HEK293 (cell line): ENCODE measurements at regions of chr10 and their contacts with region 1.

Region 1: DNA sequence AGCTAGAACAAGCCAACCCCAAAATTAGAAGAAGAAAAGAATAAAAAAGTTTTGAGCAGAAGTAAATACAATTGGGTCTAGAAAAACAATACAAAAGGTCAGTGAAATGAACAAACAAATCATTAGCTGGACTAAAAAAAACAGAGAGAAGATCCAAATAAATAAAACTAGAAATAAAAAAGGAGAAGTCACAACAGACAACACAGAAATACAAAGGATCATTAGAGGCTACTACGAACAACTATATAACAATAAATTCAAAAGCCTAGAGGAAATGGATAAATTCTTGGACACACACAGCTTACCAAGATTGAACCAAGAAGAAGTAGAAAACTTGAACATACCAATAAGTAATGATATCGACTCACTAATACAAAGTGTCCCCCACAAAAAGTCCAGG is 13.4 kb upstream of the ADRA2A start:
- H3K4me3 ChIP-seq: no peak overlapping the region
- H3K27ac ChIP-seq: no peak overlapping the region
- H3K4me1 ChIP-seq: no peaks in the 10 kb centered on the region
- CTCF ChIP-seq: no peak

Region 2: GRCh38 chr10:111076191-111076681 is 12.8 kb after region 1 on chr10:
- CTCF ChIA-PET with region 1: interaction called, 15 read pairs
- POLR2A ChIA-PET with region 1: no interaction called
- H3K4me3 ChIP-seq: peak overlapping the region; percentile 51
- H3K27ac ChIP-seq: no peak overlapping the region
- H3K4me1 ChIP-seq: peaks cover 2% of the 10 kb centered on the region; the same call in 1 of the 2 replicates
- CTCF ChIP-seq: peak; percentile 92